ENCODE measurements at regions of chr1 and their contacts with region 1.

Region 1: GRCh38 chr1:155172732-155173477 is at the start of gene KRTCAP2:
- DNase-seq: peak; percentile 87 to 97 (median 94)
- ATAC-seq: peak; percentile 82
- H3K4me3 ChIP-seq: peak within 1 kb of the TSS; percentile 72 to 98
- H3K4me3 Mint-ChIP-seq: peak within 1 kb of the TSS; percentile 96
- H3K27ac ChIP-seq: peak within 1 kb of the TSS; percentile 73 to 98
- H3K27ac Mint-ChIP-seq: peak within 1 kb of the TSS; percentile 97
- H3K4me1 ChIP-seq: peaks cover 47% of the 10 kb centered on the region
- H3K4me1 Mint-ChIP-seq: peaks cover 43% of the 10 kb centered on the region
- H3K27me3 ChIP-seq: no peaks in the 10 kb centered on the region
- H3K27me3 Mint-ChIP-seq: no peaks in the 10 kb centered on the region
- CTCF ChIP-seq: peak; percentile 90
- total RNA-seq, gene KRTCAP2: 58.9 to 71.2 TPM

Region 2: GRCh38 chr1:155063550-155064110 is 109.3 kb before region 1 on chr1 and contains the start of gene EFNA4:
- CTCF ChIA-PET with region 1: interaction called, 6 read pairs
- POLR2A ChIA-PET with region 1: interaction called, 3 read pairs
- intact Hi-C with region 1: loop called in 1 of 2 experiments (anchors 1 kb)
- DNase-seq: peak; percentile 59 to 92 (median 83)
- ATAC-seq: peak; percentile 87
- H3K4me3 ChIP-seq: peak within 1 kb of the TSS; percentile 79 to 85
- H3K4me3 Mint-ChIP-seq: peak within 1 kb of the TSS; percentile 88
- H3K27ac ChIP-seq: peak within 1 kb of the TSS in 1 of 2 experiments; percentile 34
- H3K27ac Mint-ChIP-seq: peak within 1 kb of the TSS; percentile 77
- H3K4me1 ChIP-seq: peaks cover 33% of the 10 kb centered on the region
- H3K4me1 Mint-ChIP-seq: peaks cover 36% of the 10 kb centered on the region
- H3K27me3 ChIP-seq: no peaks in the 10 kb centered on the region
- H3K27me3 Mint-ChIP-seq: no peaks in the 10 kb centered on the region
- CTCF ChIP-seq: no peak
- total RNA-seq, gene EFNA4: 1.4 to 1.8 TPM

Region 3: DNA sequence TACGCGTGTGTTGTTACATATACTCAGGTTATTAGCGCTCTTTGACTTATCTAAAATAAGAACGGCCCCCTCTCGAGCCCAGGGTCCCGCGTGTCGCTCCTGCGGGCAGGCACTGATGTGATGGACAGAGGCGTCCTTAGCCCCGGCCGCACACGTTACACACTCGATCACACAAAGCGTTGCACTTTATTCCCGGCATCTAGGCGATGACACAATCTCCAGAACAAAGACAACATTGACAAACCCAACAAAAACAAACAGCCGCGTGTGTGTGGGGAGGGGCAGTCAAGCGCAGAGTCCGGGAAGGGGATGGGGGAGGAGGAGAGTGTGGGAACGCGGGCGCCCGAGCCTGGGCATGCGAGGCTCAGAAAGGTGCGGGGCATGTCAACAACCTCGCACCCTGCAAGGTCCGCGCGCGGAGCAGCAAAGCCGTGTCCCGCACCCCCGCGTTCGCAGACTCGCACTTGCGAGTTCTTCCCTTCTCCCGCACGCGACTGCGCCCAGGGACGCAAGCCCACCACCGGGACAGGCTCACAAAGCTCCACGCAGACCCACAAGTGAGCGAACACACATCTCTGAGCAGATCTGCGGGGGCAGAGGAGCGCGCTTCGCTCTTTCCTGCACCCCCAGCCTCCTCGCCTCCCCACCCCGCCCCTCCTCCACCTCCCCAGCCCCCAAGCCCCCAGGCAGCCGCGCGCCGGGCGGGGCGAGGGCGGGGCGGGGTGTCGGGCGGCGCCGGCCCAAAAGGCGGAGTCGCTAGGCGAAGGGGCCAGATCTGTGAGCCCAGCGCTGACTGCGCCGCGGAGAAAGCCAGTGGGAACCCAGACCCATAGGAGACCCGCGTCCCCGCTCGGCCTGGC is 45.6 kb before region 1 on chr1 and contains the start of gene EFNA1:
- CTCF ChIA-PET with region 1: interaction called, 19 read pairs
- POLR2A ChIA-PET with region 1: interaction called, 6 read pairs
- intact Hi-C with region 1: no loop called
- DNase-seq: peak in 7 of 9 experiments; percentile 36 to 64 (median 48)
- ATAC-seq: peak; percentile 47
- H3K4me3 ChIP-seq: peak within 1 kb of the TSS; percentile 53 to 59
- H3K4me3 Mint-ChIP-seq: peak within 1 kb of the TSS; percentile 86
- H3K27ac ChIP-seq: no peak within 1 kb of the TSS
- H3K27ac Mint-ChIP-seq: peak within 1 kb of the TSS; percentile 87
- H3K4me1 ChIP-seq: peaks cover 36% of the 10 kb centered on the region
- H3K4me1 Mint-ChIP-seq: peaks cover 45% of the 10 kb centered on the region
- H3K27me3 ChIP-seq: peaks cover 0 to 2% of the 10 kb centered on the region in 2 experiments
- H3K27me3 Mint-ChIP-seq: no peaks in the 10 kb centered on the region
- CTCF ChIP-seq: no peak
- total RNA-seq, gene EFNA1: 7.3 to 10.4 TPM

Region 4: DNA sequence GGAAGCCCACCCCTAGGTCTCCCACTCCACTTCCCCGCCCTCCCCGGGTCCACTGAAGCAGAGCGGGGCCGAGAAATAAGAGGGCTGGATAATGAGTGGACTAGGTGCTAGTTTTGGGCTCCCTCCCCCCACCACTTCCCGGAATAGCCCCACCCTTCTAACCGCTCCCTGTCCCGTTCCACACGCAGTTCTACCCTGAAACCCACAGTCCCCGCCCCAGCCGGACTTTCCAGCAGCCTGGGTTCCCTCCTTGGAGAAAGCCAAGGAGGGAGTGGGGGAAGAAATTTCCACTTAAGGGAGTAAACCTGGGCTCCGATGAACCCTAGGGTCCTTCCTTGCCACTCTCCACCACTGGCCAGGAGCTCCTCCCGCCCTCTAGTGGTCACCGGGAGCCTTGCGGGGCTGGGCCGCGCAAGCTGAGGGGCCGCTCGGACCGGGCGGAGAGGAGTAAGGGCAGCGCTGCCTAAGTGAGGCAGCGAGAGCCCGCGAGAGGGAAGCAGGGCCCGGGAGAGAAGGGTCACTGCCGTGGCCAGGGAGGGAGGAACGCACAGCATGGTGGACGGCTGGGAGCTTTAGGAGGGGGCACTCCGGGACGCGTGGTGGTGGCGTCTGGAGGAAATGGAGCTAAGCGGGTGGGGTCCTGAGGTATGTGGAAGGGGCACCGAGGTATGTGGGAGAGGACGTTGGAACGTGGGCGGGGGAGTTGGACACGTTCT is 20.5 kb after region 1 on chr1:
- CTCF ChIA-PET with region 1: interaction called, 147 read pairs
- POLR2A ChIA-PET with region 1: interaction called, 53 read pairs
- intact Hi-C with region 1: loop called (anchors 1 to 2 kb)
- DNase-seq: peak in 8 of 9 experiments; percentile 57 to 84 (median 73)
- ATAC-seq: peak; percentile 14
- H3K4me3 ChIP-seq: peak overlapping the region; percentile 57 to 85
- H3K4me3 Mint-ChIP-seq: peak overlapping the region; percentile 85
- H3K27ac ChIP-seq: peak overlapping the region; percentile 87 to 89
- H3K27ac Mint-ChIP-seq: peak overlapping the region; percentile 98
- H3K4me1 ChIP-seq: peaks cover 24% of the 10 kb centered on the region
- H3K4me1 Mint-ChIP-seq: peaks cover 30% of the 10 kb centered on the region
- H3K27me3 ChIP-seq: no peaks in the 10 kb centered on the region
- H3K27me3 Mint-ChIP-seq: no peaks in the 10 kb centered on the region
- CTCF ChIP-seq: peak; percentile 87

Region 5: DNA sequence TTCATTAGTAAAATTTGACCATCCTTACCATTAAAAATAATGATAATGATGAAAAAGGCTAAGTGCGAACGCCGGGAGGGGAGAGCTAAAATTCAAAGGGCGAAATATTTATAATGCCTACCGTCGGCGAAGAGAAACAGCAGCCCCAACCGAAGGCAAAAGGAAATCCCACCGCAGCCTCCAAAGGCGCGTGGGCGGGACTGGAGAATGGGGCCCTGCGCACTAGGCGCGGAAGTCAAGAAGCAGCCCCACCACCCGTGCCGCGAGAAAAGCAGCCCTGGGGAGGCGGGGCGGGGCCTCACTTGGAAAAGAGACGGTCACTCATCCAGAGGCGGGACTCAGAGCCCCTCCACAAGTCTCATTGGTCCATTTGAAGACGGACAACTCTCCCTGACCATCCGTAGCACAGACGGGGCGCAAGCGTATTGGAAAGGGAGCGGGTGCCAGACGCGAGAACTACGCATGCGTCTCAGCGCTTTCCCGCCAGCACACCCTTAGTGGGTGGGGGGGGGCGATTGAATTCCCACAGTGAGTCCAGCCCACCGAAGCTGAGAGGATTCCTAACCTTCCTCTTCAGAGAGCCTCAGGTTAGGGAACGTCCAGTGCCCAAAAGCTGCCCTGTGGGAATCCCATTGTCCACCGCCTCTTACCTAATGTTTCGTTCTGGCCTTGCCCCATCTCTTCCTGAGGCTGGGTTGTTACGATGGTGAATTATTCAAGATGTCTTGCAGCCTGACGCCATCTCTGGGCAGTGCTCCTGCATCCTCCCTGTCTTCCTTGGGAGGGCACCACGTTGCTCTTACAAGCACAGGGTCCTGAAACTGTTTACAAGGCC is 54.6 kb after region 1 on chr1:
- CTCF ChIA-PET with region 1: interaction called, 29 read pairs
- POLR2A ChIA-PET with region 1: interaction called, 3 read pairs
- intact Hi-C with region 1: loop called in 1 of 2 experiments (anchors 1 kb)
- DNase-seq: peak; percentile 95 to 100 (median 98)
- ATAC-seq: peak; percentile 95
- H3K4me3 ChIP-seq: peak overlapping the region; percentile 71 to 74
- H3K4me3 Mint-ChIP-seq: peak overlapping the region; percentile 88
- H3K27ac ChIP-seq: peak overlapping the region; percentile 70 to 86
- H3K27ac Mint-ChIP-seq: peak overlapping the region; percentile 85
- H3K4me1 ChIP-seq: peaks cover 18% of the 10 kb centered on the region
- H3K4me1 Mint-ChIP-seq: peaks cover 24% of the 10 kb centered on the region
- H3K27me3 ChIP-seq: no peaks in the 10 kb centered on the region
- H3K27me3 Mint-ChIP-seq: no peaks in the 10 kb centered on the region
- CTCF ChIP-seq: no peak

Region 6: GRCh38 chr1:155323798-155324610 is 151.1 kb after region 1 on chr1:
- CTCF ChIA-PET with region 1: no interaction called
- POLR2A ChIA-PET with region 1: no interaction called
- intact Hi-C with region 1: loop called in 1 of 2 experiments (anchors 10 kb)
- DNase-seq: peak; percentile 66 to 94 (median 85)
- ATAC-seq: peak; percentile 81
- H3K4me3 ChIP-seq: peak overlapping the region; percentile 89 to 100
- H3K4me3 Mint-ChIP-seq: peak overlapping the region; percentile 90
- H3K27ac ChIP-seq: peak overlapping the region; percentile 69 to 90
- H3K27ac Mint-ChIP-seq: peak overlapping the region; percentile 55
- H3K4me1 ChIP-seq: peaks cover 34% of the 10 kb centered on the region
- H3K4me1 Mint-ChIP-seq: peaks cover 33% of the 10 kb centered on the region
- H3K27me3 ChIP-seq: no peaks in the 10 kb centered on the region
- H3K27me3 Mint-ChIP-seq: no peaks in the 10 kb centered on the region
- CTCF ChIP-seq: no peak

Region 7: GRCh38 chr1:155607708-155608107 is 434.8 kb after region 1 on chr1:
- CTCF ChIA-PET with region 1: no interaction called
- POLR2A ChIA-PET with region 1: no interaction called
- intact Hi-C with region 1: no loop called
- DNase-seq: no peak
- ATAC-seq: no peak
- H3K4me3 ChIP-seq: no peak overlapping the region
- H3K4me3 Mint-ChIP-seq: no peak overlapping the region
- H3K27ac ChIP-seq: no peak overlapping the region
- H3K27ac Mint-ChIP-seq: no peak overlapping the region
- H3K4me1 ChIP-seq: no peaks in the 10 kb centered on the region
- H3K4me1 Mint-ChIP-seq: peaks cover 6% of the 10 kb centered on the region
- H3K27me3 ChIP-seq: no peaks in the 10 kb centered on the region
- H3K27me3 Mint-ChIP-seq: no peaks in the 10 kb centered on the region
- CTCF ChIP-seq: no peak